ENCODE measurements at regions of chr9 and their contacts with region 1.

Region 1: GRCh38 chr9:22970434-22970975 is 523.9 kb downstream of the DMRTA1 start:
- DNase-seq: no peak
- H3K4me3 ChIP-seq: no peak overlapping the region
- H3K27ac ChIP-seq: no peak overlapping the region
- H3K4me1 ChIP-seq: no peaks in the 10 kb centered on the region
- CTCF ChIP-seq: no peak

Region 2: GRCh38 chr9:22898591-22898990 is 71.9 kb before region 1 on chr9:
- CTCF ChIA-PET with region 1: no interaction called
- POLR2A ChIA-PET with region 1: no interaction called
- intact Hi-C with region 1: loop called (anchors 2 kb)
- DNase-seq: no peak
- H3K4me3 ChIP-seq: no peak overlapping the region
- H3K27ac ChIP-seq: no peak overlapping the region
- H3K4me1 ChIP-seq: no peaks in the 10 kb centered on the region
- CTCF ChIP-seq: no peak

Measured in OCI-LY7 (cell line).